Activated CD4-positive, alpha-beta memory T cell treated with anti-CD3 and anti-CD28 coated beads, Interleukin-2, amount 10 ng/mL, durations not matched to agents 7 days and 5 days (primary cell): ENCODE measurements at regions of chr2 and their contacts with region 1.

Region 1: GRCh38 chr2:74178201-74179062 is at the start of gene MOB1A:
- DNase-seq: peak; percentile 99
- H3K4me3 Mint-ChIP-seq: peak within 1 kb of the TSS; percentile 87
- H3K27ac Mint-ChIP-seq: peak within 1 kb of the TSS; percentile 89
- H3K4me1 Mint-ChIP-seq: peaks cover 45% of the 10 kb centered on the region
- H3K27me3 Mint-ChIP-seq: no peaks in the 10 kb centered on the region
- total RNA-seq, gene MOB1A: 188 to 193 TPM

Region 2: GRCh38 chr2:73828818-73829570 is 349.4 kb before region 1 on chr2 and contains the start of gene STAMBP:
- CTCF ChIA-PET with region 1: interaction called, 10 read pairs
- POLR2A ChIA-PET with region 1: interaction called, 11 read pairs
- DNase-seq: peak; percentile 93
- H3K4me3 Mint-ChIP-seq: peak within 1 kb of the TSS; percentile 95
- H3K27ac Mint-ChIP-seq: peak within 1 kb of the TSS; percentile 93
- H3K4me1 Mint-ChIP-seq: peaks cover 43% of the 10 kb centered on the region
- H3K27me3 Mint-ChIP-seq: no peaks in the 10 kb centered on the region
- total RNA-seq, gene STAMBP: 51.1 to 51.2 TPM

Region 3: DNA sequence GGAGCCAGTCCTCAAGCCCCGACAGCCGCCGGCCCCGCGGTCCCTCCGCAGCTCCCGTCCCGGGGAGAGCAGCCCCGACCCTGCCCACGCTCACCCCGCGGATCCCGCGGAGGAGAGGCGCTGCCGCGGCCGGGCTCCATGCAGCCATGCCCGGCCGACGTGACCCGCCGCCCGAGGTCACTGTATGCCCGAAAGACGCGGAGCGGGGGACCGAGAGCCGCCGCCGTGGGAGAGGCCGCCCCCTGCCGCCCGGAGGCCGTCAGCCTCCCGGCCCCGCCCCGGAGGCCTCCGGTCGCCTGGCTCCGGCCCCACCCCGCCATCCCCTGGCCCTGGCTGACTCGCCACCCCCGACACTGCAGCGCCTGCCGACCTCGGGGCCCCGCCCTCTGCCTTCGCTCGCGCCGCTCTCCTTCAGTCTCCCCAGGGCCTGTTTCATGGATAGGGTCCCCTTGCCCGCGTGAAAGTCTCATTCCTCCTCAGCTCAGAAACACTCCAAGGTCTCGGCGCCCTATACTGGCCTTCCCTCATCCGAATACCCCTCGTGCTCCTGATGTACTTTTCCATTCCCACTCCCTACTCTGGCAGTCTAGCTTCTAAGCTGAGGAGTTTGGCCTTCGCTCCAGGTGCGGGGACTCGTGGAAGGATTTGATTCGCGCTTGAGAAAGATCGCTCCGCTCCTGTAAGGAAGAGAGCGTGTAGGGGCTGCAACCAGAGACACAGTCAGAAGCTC is 30.5 kb before region 1 on chr2 and contains the start of gene BOLA3:
- CTCF ChIA-PET with region 1: interaction called, 32 read pairs
- POLR2A ChIA-PET with region 1: interaction called, 38 read pairs
- DNase-seq: peak; percentile 88
- H3K4me3 Mint-ChIP-seq: no peak within 1 kb of the TSS
- H3K27ac Mint-ChIP-seq: no peak within 1 kb of the TSS
- H3K4me1 Mint-ChIP-seq: peaks cover 12% of the 10 kb centered on the region
- H3K27me3 Mint-ChIP-seq: no peaks in the 10 kb centered on the region
- total RNA-seq, gene BOLA3: 46.5 to 55.4 TPM

Region 4: DNA sequence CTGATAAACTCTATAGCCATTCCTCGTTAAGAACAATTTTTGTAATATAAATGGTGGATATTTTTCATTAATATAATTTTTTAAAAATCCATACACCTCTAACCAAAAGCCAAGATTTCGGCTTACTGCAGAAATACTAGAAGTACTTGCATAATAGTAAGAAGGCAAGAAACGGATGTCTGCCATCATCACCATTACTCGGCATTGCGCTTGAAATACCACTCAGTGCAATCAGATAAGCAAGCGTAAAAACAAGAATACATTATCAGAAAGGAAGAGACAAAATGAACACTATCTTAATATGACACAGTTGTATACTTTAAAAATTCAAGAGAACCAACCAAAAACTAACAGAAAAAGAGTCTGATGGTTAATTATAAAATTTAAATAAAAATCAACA is 15.5 kb before region 1 on chr2:
- CTCF ChIA-PET with region 1: interaction called, 13 read pairs
- POLR2A ChIA-PET with region 1: interaction called, 37 read pairs
- DNase-seq: no peak
- H3K4me3 Mint-ChIP-seq: no peak overlapping the region
- H3K27ac Mint-ChIP-seq: no peak overlapping the region
- H3K4me1 Mint-ChIP-seq: peaks cover 4% of the 10 kb centered on the region
- H3K27me3 Mint-ChIP-seq: no peaks in the 10 kb centered on the region

Region 5: DNA sequence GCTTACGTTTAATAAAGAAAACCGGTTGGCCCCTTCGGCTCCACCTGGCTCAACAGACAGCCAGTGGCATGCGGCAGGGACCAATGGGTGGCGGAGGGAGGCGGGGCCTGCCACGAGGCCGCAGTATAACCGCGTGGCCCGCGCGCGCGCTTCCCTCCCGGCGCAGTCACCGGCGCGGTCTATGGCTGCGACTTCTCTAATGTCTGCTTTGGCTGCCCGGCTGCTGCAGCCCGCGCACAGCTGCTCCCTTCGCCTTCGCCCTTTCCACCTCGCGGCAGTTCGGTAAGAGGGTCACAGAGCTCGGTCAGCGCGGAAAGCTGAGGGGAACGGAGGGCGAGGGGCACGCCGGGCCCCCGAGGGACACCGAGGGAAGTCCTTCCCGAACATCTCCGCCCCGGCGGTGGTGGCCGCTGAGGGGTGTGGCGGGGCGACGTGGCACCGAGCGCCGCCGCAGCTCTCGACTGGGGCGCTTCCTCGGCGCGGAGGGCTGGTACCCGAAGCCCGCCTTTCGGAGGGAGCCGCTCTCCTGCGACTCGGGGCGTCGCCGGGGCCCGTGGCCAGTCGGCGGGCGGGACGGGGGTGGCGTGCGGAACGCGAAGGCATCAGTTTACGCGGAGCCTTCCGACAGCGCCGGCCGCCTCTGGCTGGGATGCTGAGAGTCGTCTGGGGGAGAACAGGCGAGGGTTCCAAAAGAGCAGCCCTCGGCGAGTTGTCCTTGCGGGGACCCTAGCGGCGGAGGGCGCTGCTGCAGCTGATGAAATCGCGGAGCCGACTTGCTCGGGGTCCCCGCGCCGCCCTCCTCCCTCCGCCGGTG is 20.2 kb after region 1 on chr2 and contains the start of gene MTHFD2:
- CTCF ChIA-PET with region 1: interaction called, 100 read pairs
- POLR2A ChIA-PET with region 1: interaction called, 262 read pairs
- DNase-seq: peak; percentile 94
- H3K4me3 Mint-ChIP-seq: peak within 1 kb of the TSS; percentile 99
- H3K27ac Mint-ChIP-seq: peak within 1 kb of the TSS; percentile 100
- H3K4me1 Mint-ChIP-seq: peaks cover 51% of the 10 kb centered on the region
- H3K27me3 Mint-ChIP-seq: no peaks in the 10 kb centered on the region
- total RNA-seq, gene MTHFD2: 264 to 277 TPM

Region 6: DNA sequence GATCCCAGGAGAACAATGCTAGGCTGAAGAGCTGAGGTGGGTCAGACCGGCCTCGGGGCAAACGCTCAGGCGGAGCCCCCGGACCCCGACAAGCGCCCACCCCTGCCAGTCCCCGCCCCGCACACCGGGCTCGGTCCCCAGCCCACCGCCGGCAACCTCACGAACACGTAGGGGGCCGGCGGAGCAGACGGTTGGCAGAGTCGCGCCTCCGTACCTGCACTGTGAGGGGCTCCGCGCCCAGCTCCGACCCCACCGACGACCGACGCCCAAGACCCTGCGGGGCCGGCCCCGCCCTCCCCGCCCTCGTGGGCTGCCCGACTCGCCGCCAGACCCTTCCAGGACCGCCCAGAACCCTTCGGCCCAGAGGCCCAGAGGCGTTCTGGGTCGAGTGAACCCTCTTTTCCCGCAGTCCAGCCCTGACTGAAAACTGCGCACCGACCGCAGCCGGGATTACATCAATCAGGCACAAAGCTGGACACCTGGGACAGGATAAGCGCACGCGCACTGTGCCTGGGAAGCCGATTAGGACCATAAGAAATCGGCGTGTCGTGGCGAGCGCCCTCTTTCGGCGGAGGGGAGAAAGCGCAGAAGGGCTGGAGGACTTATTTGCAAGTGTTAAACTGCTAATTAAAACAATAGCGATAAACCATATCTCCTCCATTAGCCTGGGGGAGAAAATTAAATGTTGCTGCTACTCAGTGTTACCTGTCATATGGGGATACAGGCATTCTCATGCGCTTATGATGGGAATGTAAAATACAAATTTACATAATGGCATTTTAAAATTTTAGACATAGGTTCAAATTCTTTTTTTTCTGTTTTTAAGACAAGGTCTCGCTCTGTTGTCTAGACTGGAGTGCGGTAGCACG is 213.4 kb after region 1 on chr2:
- CTCF ChIA-PET with region 1: interaction called, 3 read pairs
- POLR2A ChIA-PET with region 1: interaction called, 15 read pairs
- DNase-seq: peak; percentile 95
- H3K4me3 Mint-ChIP-seq: peak overlapping the region; percentile 94
- H3K27ac Mint-ChIP-seq: peak overlapping the region; percentile 96
- H3K4me1 Mint-ChIP-seq: peaks cover 12% of the 10 kb centered on the region
- H3K27me3 Mint-ChIP-seq: peaks cover 6% of the 10 kb centered on the region